ENCODE measurements at regions of chr7 and their contacts with region 1.

Region 1: DNA sequence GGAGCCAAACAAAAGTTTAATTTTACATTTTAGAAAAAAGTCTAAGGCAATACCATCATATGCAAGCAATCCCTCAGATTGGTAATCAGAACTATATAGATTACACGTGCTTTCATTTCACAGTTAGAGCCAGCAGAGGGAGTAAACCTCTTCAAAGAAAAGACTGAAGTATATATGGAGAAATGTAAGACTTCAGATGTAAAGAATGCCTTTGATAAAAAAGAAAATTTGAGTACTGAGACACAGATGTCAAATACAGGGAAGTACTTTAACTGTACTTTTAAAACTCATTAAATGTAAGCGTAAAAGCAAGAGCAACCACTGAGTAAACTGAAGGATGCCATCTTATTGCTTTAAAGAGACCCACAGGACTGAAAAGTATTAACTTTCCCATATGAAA is 101.4 kb upstream of the FAM133B start:
- DNase-seq: peak; percentile 29
- H3K4me3 ChIP-seq: no peak overlapping the region
- H3K27ac ChIP-seq: no peak overlapping the region
- H3K27me3 ChIP-seq: no peaks in the 10 kb centered on the region
- CTCF ChIP-seq: peak; percentile 60

Region 2: GRCh38 chr7:92944633-92945032 is 253.1 kb after region 1 on chr7:
- CTCF ChIA-PET with region 1: interaction called, 11 read pairs
- POLR2A ChIA-PET with region 1: interaction called, 6 read pairs
- DNase-seq: no peak
- H3K4me3 ChIP-seq: no peak overlapping the region
- H3K27ac ChIP-seq: no peak overlapping the region
- H3K27me3 ChIP-seq: no peaks in the 10 kb centered on the region
- CTCF ChIP-seq: no peak

Measured in AG04450 (cell line).